ENCODE measurements at regions of chr5 and their contacts with region 1.

Region 1: GRCh38 chr5:135457424-135458071 is 5.4 kb upstream of the TIFAB start:
- DNase-seq: no peak
- ATAC-seq: peak; percentile 91
- H3K4me3 ChIP-seq: no peak overlapping the region
- H3K27ac ChIP-seq: no peak overlapping the region
- H3K4me1 ChIP-seq: peaks cover 16% of the 10 kb centered on the region
- H3K27me3 ChIP-seq: no peaks in the 10 kb centered on the region; a peak in 2 of 4 replicates
- CTCF ChIP-seq: peak; percentile 82 to 95 (median 88)
- EP300 ChIP-seq: no peak
- POLR2A ChIP-seq: no peak
- RAD21 ChIP-seq: peak; percentile 48

Region 2: DNA sequence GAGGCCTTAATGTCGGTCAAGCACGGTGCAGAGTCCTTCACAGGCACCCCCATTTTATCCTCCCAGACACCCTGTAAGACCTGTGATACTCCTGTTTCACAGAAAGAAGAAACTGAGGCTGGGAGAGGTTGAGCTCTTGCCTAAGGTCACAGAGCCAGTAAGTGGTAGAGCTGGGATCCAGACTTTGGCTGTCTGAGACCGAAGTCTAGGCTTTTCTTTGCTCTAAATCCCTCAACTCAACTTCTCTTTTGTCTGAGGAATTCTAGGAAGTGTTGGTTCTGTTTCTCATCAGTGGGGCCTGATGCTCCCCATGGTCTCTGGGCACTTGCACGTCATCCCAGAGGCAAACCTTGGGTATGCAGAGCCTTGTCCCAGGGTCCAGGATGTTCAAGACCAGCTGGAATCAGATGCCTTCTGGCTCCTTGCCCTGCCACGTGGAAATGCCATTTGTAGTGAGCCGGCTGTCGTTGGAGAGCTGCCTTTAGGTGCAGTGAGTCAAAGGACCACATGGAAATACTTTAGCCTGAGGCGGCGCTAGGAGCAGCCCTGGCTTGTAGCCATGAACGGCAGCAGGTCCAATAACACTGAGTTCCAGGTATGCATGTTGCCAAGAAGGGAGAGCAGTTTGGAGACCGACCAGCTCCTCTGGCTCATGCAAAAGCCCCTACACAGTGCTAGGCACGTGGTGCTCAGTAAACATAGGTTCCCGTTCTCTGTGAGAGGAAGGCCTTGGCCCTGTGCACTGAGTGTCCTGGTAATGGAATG is 19.6 kb before region 1 on chr5:
- CTCF ChIA-PET with region 1: interaction called, 48 read pairs
- POLR2A ChIA-PET with region 1: interaction called, 7 read pairs
- RAD21 ChIA-PET with region 1: no interaction called
- SMC1A ChIA-PET with region 1: interaction called, 5 read pairs
- in situ Hi-C with region 1: no loop called
- intact Hi-C with region 1: no loop called
- DNase-seq: no peak
- ATAC-seq: no peak
- H3K4me3 ChIP-seq: no peak overlapping the region
- H3K27ac ChIP-seq: no peak overlapping the region; the same call in 1 of the 2 replicates
- H3K4me1 ChIP-seq: peaks cover 19% of the 10 kb centered on the region
- H3K27me3 ChIP-seq: no peaks in the 10 kb centered on the region
- CTCF ChIP-seq: no peak
- EP300 ChIP-seq: no peak
- POLR2A ChIP-seq: no peak
- RAD21 ChIP-seq: no peak

Region 3: GRCh38 chr5:135478938-135479337 is 21.4 kb after region 1 on chr5:
- CTCF ChIA-PET with region 1: interaction called, 12 read pairs
- POLR2A ChIA-PET with region 1: no interaction called
- RAD21 ChIA-PET with region 1: no interaction called
- SMC1A ChIA-PET with region 1: no interaction called
- in situ Hi-C with region 1: no loop called
- intact Hi-C with region 1: no loop called
- DNase-seq: no peak
- ATAC-seq: no peak
- H3K4me3 ChIP-seq: no peak overlapping the region
- H3K27ac ChIP-seq: no peak overlapping the region
- H3K4me1 ChIP-seq: no peaks in the 10 kb centered on the region
- H3K27me3 ChIP-seq: peaks cover 0 to 3% of the 10 kb centered on the region in 2 experiments; a peak in 3 of 4 replicates
- CTCF ChIP-seq: no peak
- EP300 ChIP-seq: no peak
- POLR2A ChIP-seq: no peak
- RAD21 ChIP-seq: no peak

Region 4: DNA sequence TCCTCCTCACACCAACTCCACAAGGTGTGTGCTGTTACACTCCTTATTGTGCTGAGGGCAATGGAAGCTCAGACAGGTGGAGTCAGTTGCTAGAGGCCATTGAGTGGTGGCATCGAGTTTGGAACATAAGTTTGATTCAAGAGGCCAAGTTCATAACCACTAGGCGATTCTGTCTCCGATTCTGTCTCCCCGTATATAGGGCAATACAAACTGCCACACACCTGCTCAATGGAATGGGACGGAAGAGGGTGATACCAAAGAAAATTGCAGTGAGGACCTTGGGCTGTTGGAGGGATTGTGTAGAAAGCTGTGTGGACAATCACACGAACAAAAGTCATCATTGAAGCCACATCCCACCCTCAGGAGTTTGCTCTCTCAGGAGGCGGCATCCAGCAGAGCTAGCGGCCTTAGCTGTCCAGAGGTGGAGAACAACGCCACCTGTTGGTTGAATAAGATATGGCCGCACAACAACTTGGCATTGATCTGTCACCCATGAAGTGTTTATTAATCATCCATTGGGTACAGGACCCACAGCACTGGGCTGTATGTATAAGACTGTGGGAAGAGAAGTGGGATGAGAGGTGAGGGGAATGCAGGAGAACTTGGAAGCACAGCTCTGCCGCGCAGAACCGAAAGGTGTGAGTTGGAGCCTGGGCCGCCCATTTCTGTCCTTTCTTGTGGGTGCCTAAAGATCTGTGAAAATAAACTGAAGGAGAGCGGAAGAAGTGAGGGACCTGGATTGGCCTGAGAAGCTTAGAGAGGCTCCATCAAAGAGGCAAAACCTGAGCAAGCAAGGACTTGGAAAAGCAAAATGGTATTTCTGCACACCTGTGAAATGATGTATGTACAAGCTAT is 94.3 kb after region 1 on chr5:
- CTCF ChIA-PET with region 1: interaction called, 363 read pairs
- POLR2A ChIA-PET with region 1: no interaction called
- RAD21 ChIA-PET with region 1: interaction called, 33 read pairs
- SMC1A ChIA-PET with region 1: interaction called, 63 read pairs
- in situ Hi-C with region 1: no loop called
- intact Hi-C with region 1: loop called (anchors 2 kb)
- DNase-seq: peak; percentile 12
- ATAC-seq: peak; percentile 97
- H3K4me3 ChIP-seq: no peak overlapping the region
- H3K27ac ChIP-seq: no peak overlapping the region
- H3K4me1 ChIP-seq: no peaks in the 10 kb centered on the region
- H3K27me3 ChIP-seq: no peaks in the 10 kb centered on the region; a peak in 2 of 4 replicates
- CTCF ChIP-seq: peak; percentile 71 to 82 (median 80); a peak in 5 of 6 replicates
- EP300 ChIP-seq: no peak
- POLR2A ChIP-seq: no peak
- RAD21 ChIP-seq: peak; percentile 71

Region 5: GRCh38 chr5:135560858-135561257 is 103.3 kb after region 1 on chr5:
- CTCF ChIA-PET with region 1: interaction called, 363 read pairs
- POLR2A ChIA-PET with region 1: no interaction called
- RAD21 ChIA-PET with region 1: interaction called, 3 read pairs
- SMC1A ChIA-PET with region 1: interaction called, 5 read pairs
- in situ Hi-C with region 1: no loop called
- intact Hi-C with region 1: no loop called
- DNase-seq: peak; percentile 21
- ATAC-seq: peak; percentile 99
- H3K4me3 ChIP-seq: no peak overlapping the region
- H3K27ac ChIP-seq: no peak overlapping the region
- H3K4me1 ChIP-seq: no peaks in the 10 kb centered on the region
- H3K27me3 ChIP-seq: peaks cover 3% of the 10 kb centered on the region in 2 experiments; a peak in 3 of 4 replicates
- CTCF ChIP-seq: peak; percentile 78 to 87 (median 85)
- EP300 ChIP-seq: no peak
- POLR2A ChIP-seq: no peak
- RAD21 ChIP-seq: peak; percentile 70

Region 6: GRCh38 chr5:135565725-135566421 is 108.3 kb after region 1 on chr5:
- CTCF ChIA-PET with region 1: interaction called, 203 read pairs
- POLR2A ChIA-PET with region 1: no interaction called
- RAD21 ChIA-PET with region 1: interaction called, 6 read pairs
- SMC1A ChIA-PET with region 1: interaction called, 5 read pairs
- in situ Hi-C with region 1: no loop called
- intact Hi-C with region 1: no loop called
- DNase-seq: no peak
- ATAC-seq: peak; percentile 92
- H3K4me3 ChIP-seq: no peak overlapping the region
- H3K27ac ChIP-seq: no peak overlapping the region
- H3K4me1 ChIP-seq: no peaks in the 10 kb centered on the region; the same call in 1 of the 2 replicates
- H3K27me3 ChIP-seq: peaks cover 0 to 3% of the 10 kb centered on the region in 2 experiments; a peak in 3 of 4 replicates
- CTCF ChIP-seq: peak; percentile 83 to 97 (median 94)
- EP300 ChIP-seq: no peak
- POLR2A ChIP-seq: no peak
- RAD21 ChIP-seq: peak; percentile 50; the same call in 1 of the 2 replicates